Sigmoid colon (tissue), 7 donors: ENCODE measurements at regions of chr22 and their contacts with region 1.

Region 1: GRCh38 chr22:25110846-25111578 is 88.6 kb upstream of the CRYBB3 start:
- DNase-seq: peak; percentile 77
- H3K4me3 ChIP-seq: peak overlapping the region; percentile 42 to 59 (median 52)
- H3K27ac ChIP-seq: peak overlapping the region; percentile 51 to 79 (median 54)
- H3K4me1 ChIP-seq: peaks cover 0 to 20% (median 14%) of the 10 kb centered on the region in 4 donors
- H3K27me3 ChIP-seq: no peaks in the 10 kb centered on the region
- CTCF ChIP-seq: peak; percentile 37 to 52 (median 45)
- EP300 ChIP-seq: no peak
- POLR2A ChIP-seq: no peak

Region 2: DNA sequence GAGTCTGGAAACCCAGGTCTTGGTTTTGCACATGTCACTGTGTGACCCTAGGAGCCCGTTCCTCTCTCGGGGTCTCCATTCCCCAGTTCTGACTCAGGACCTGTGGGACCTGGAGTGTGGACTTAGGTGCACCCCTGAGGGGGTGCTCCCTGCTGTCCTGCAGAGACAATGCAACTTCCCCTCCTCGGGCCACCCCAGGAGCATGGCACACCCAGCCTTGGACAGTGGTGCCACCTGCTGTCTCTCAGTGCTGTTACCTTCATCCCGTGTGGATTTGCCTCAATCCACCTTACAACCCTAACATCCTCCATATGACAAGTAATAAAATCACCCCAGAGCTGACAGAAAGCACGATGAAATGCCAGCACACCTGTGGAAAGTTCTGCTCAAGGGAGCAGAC is 61.1 kb after region 1 on chr22:
- intact Hi-C with region 1: loop called (anchors 1 kb)
- DNase-seq: no peak
- H3K4me3 ChIP-seq: no peak overlapping the region
- H3K27ac ChIP-seq: no peak overlapping the region
- H3K4me1 ChIP-seq: no peaks in the 10 kb centered on the region
- H3K27me3 ChIP-seq: no peaks in the 10 kb centered on the region
- CTCF ChIP-seq: peak; percentile 23 to 55 (median 45)
- EP300 ChIP-seq: no peak
- POLR2A ChIP-seq: no peak